ENCODE measurements at regions of chr6 and their contacts with region 1.

Region 1: GRCh38 chr6:13711733-13712598 is at the start of gene RANBP9:
- DNase-seq: peak; percentile 84
- ATAC-seq: peak; percentile 88
- H3K4me3 ChIP-seq: peak within 1 kb of the TSS; percentile 92 to 97 (median 95)
- H3K27ac ChIP-seq: peak within 1 kb of the TSS; percentile 93
- H3K4me1 ChIP-seq: peaks cover 49% of the 10 kb centered on the region
- H3K27me3 ChIP-seq: no peaks in the 10 kb centered on the region; a peak in 1 of 5 replicates
- CTCF ChIP-seq: peak; percentile 34; the same call in 1 of the 2 replicates
- EP300 ChIP-seq: peak in 1 of 2 experiments; percentile 39; a peak in 1 of 4 replicates
- POLR2A ChIP-seq: peak; percentile 84
- RAD21 ChIP-seq: no peak
- total RNA-seq, gene RANBP9: 30.6 and 40.8 TPM in 2 replicates

Region 2: GRCh38 chr6:13604546-13605416 is 107.2 kb before region 1 on chr6:
- CTCF ChIA-PET with region 1: no interaction called
- POLR2A ChIA-PET with region 1: interaction called, 11 read pairs
- in situ Hi-C with region 1: no loop called
- intact Hi-C with region 1: no loop called
- DNase-seq: peak; percentile 100
- ATAC-seq: peak; percentile 94
- H3K4me3 ChIP-seq: peak overlapping the region in 2 of 3 experiments; percentile 32 to 46; a peak in 2 of 6 replicates
- H3K27ac ChIP-seq: peak overlapping the region; percentile 87
- H3K4me1 ChIP-seq: peaks cover 44% of the 10 kb centered on the region
- H3K27me3 ChIP-seq: no peaks in the 10 kb centered on the region
- CTCF ChIP-seq: no peak
- EP300 ChIP-seq: peak; percentile 97 to 99
- POLR2A ChIP-seq: peak in 1 of 2 experiments; percentile 46; a peak in 1 of 4 replicates
- RAD21 ChIP-seq: peak; percentile 9; the same call in 1 of the 2 replicates

Region 3: GRCh38 chr6:13614926-13615798 is 96.8 kb before region 1 on chr6 and contains the start of gene NOL7:
- CTCF ChIA-PET with region 1: no interaction called
- POLR2A ChIA-PET with region 1: interaction called, 24 read pairs
- in situ Hi-C with region 1: loop called (anchors 5 kb)
- intact Hi-C with region 1: loop called (anchors 5 kb)
- DNase-seq: peak; percentile 97
- ATAC-seq: peak; percentile 92
- H3K4me3 ChIP-seq: peak within 1 kb of the TSS; percentile 89 to 97 (median 93)
- H3K27ac ChIP-seq: peak within 1 kb of the TSS; percentile 91
- H3K4me1 ChIP-seq: peaks cover 35% of the 10 kb centered on the region
- H3K27me3 ChIP-seq: no peaks in the 10 kb centered on the region; a peak in 1 of 5 replicates
- CTCF ChIP-seq: peak; percentile 100
- EP300 ChIP-seq: peak in 1 of 2 experiments; percentile 11; a peak in 1 of 4 replicates
- POLR2A ChIP-seq: peak; percentile 93 to 96
- RAD21 ChIP-seq: peak; percentile 55; the same call in 1 of the 2 replicates
- total RNA-seq, gene NOL7: 186 and 215 TPM in 2 replicates

Region 4: DNA sequence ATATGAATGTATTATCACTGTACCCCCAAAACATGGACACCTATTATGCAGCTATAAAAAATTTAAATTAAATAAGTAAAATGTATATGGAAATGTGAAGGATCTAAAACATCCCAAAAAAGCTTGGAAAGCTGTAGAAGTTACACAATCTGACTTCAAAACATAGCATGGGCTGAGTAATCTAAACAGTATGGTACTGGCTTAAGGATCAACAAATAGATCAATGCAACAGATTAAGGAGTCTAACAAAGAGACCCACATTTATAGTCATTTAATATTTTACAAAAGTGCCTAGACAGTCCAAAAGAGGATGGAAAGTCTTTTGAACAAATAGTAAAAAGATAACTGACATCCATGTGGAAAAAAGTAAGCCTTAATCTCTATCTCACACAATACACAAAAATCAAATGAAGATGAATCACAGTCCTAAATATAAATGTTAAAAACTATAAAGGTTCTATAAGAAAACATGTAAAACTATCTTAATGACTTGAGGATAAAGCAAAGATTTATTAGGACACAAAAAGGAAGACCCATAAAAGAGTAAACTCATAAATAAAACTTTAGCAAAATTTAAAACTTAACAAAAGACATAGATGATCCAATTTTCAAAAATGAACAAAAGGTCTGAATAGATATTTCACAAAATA is 47.1 kb before region 1 on chr6:
- CTCF ChIA-PET with region 1: no interaction called
- POLR2A ChIA-PET with region 1: interaction called, 8 read pairs
- in situ Hi-C with region 1: no loop called
- intact Hi-C with region 1: loop called (anchors 2 kb)
- DNase-seq: peak; percentile 65
- ATAC-seq: peak; percentile 66
- H3K4me3 ChIP-seq: no peak overlapping the region
- H3K27ac ChIP-seq: peak overlapping the region; percentile 12
- H3K4me1 ChIP-seq: peaks cover 85% of the 10 kb centered on the region
- H3K27me3 ChIP-seq: no peaks in the 10 kb centered on the region
- CTCF ChIP-seq: no peak
- EP300 ChIP-seq: peak in 1 of 2 experiments; percentile 84; a peak in 2 of 4 replicates
- POLR2A ChIP-seq: no peak
- RAD21 ChIP-seq: no peak

Region 5: GRCh38 chr6:13678255-13678983 is 33.5 kb before region 1 on chr6:
- CTCF ChIA-PET with region 1: no interaction called
- POLR2A ChIA-PET with region 1: interaction called, 4 read pairs
- in situ Hi-C with region 1: no loop called
- intact Hi-C with region 1: loop called (anchors 1 kb)
- DNase-seq: peak; percentile 30
- ATAC-seq: peak; percentile 87
- H3K4me3 ChIP-seq: peak overlapping the region in 2 of 3 experiments; percentile 4 to 38; a peak in 1 of 6 replicates
- H3K27ac ChIP-seq: peak overlapping the region; percentile 83
- H3K4me1 ChIP-seq: peaks cover 33% of the 10 kb centered on the region
- H3K27me3 ChIP-seq: no peaks in the 10 kb centered on the region
- CTCF ChIP-seq: no peak
- EP300 ChIP-seq: no peak; a peak in 1 of 4 replicates
- POLR2A ChIP-seq: no peak
- RAD21 ChIP-seq: no peak

Region 6: DNA sequence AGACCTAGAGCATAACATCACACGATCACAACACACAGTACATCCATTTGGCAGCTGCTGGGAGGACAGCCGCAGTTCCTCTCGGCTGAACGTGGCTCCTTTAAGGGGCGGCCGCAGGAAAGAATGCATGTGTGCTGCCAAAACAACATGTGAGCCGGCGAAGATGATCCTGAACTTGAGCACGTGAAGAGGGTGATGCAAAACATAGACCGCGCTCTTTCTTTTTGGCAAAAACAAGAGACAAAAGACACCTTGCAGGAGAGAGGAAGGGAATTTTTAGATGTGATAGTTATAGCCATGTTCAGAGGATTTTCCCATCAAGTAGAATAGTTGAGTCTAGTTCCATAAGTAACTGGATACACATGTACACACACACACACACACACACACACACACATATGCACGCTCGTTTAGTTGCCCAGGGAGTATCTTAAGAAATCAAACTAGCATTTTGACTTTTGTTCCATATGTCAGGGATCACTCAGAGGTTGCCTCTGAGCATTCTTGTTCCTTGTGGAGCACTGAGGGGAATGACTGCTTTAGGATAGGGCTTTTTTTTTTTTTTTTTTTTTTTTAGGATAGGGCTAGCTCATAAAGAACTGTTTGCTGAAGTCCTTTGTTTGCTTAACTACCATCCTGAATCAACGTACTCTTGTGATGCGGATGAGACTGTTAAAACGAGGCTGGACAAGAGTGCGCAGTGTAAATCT is 21.4 kb after region 1 on chr6:
- CTCF ChIA-PET with region 1: no interaction called
- POLR2A ChIA-PET with region 1: no interaction called
- in situ Hi-C with region 1: no loop called
- intact Hi-C with region 1: no loop called
- DNase-seq: peak; percentile 46
- ATAC-seq: peak; percentile 81
- H3K4me3 ChIP-seq: peak overlapping the region in 1 of 3 experiments; percentile 51; a peak in 3 of 6 replicates
- H3K27ac ChIP-seq: no peak overlapping the region
- H3K4me1 ChIP-seq: peaks cover 19% of the 10 kb centered on the region
- H3K27me3 ChIP-seq: peaks cover 0 to 28% of the 10 kb centered on the region in 2 experiments; a peak in 2 of 5 replicates
- CTCF ChIP-seq: no peak
- EP300 ChIP-seq: no peak
- POLR2A ChIP-seq: no peak
- RAD21 ChIP-seq: no peak

Region 7: GRCh38 chr6:13814176-13814937 is 102.4 kb after region 1 on chr6 and contains the start of gene MCUR1:
- CTCF ChIA-PET with region 1: no interaction called
- POLR2A ChIA-PET with region 1: interaction called, 10 read pairs
- in situ Hi-C with region 1: no loop called
- intact Hi-C with region 1: loop called (anchors 5 kb)
- DNase-seq: peak; percentile 77
- ATAC-seq: peak; percentile 86
- H3K4me3 ChIP-seq: peak within 1 kb of the TSS; percentile 74 to 92 (median 84)
- H3K27ac ChIP-seq: peak within 1 kb of the TSS; percentile 94
- H3K4me1 ChIP-seq: peaks cover 54% of the 10 kb centered on the region
- H3K27me3 ChIP-seq: no peaks in the 10 kb centered on the region
- CTCF ChIP-seq: peak; percentile 66
- EP300 ChIP-seq: no peak
- POLR2A ChIP-seq: peak; percentile 87 to 89
- RAD21 ChIP-seq: peak; percentile 66
- total RNA-seq, gene MCUR1: 27.6 and 29.6 TPM in 2 replicates

Region 8: DNA sequence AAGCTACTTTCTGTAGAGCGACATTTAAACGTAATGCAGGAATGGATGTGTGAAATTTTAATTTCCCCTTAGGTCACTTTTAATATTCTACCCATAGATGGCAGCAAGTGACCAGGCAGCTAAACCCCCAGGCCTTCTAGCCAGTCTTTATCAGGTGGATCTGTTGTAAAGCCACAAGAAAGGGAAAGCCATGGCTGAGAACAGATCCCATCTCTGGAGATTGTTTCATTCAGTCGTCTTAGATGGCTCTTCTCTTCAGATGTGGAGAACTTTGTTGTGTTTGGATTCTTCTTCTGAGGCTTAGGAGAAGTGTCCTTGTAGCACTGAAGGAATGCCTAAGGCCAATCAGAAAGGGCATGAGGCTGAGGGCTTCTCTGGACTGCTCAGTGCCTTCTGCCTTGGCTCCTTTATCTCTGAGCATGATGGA is 197.0 kb after region 1 on chr6:
- CTCF ChIA-PET with region 1: no interaction called
- POLR2A ChIA-PET with region 1: no interaction called
- in situ Hi-C with region 1: no loop called
- intact Hi-C with region 1: no loop called
- DNase-seq: peak; percentile 55
- ATAC-seq: peak; percentile 88
- H3K4me3 ChIP-seq: no peak overlapping the region
- H3K27ac ChIP-seq: no peak overlapping the region
- H3K4me1 ChIP-seq: no peaks in the 10 kb centered on the region
- H3K27me3 ChIP-seq: no peaks in the 10 kb centered on the region
- CTCF ChIP-seq: peak; percentile 86
- EP300 ChIP-seq: no peak
- POLR2A ChIP-seq: no peak
- RAD21 ChIP-seq: peak; percentile 78

Region 9: DNA sequence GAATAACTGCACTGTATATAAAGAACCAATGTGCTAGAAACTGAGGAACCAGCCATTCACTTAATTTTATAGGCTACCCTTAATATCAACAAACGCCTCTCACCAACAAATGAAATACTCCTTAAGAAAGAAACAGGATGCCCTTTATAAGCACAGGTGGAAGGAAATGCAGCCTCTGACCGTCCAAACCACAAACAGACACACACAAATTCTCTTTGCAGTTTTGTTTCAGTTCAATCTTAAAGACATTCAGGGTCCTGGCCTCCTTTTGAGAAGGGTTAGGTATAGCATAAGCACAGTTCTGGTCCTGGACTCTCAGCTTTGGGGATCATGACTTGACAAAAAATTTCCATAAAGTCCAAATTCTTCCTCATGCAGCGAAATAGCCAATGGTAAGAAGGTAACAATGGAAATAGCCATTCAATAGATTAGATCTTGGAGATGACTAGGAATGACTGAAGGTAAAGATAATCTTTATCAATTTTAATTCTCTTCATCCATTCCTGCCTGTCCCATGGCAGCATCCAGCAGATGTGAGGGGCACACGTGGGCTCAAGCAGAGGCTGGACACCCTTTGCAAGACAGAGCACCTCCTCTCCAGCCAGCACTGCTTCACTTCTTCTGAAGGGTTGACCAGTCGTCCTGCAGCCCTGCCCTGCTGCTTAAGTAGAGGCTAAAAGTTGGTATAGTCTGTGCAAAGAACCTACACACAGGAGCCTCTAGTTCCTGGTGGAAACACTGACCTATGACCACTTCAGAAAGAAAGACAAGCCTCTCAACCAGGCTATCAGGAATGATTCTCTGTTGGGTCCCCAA is 529.5 kb after region 1 on chr6:
- CTCF ChIA-PET with region 1: no interaction called
- POLR2A ChIA-PET with region 1: no interaction called
- in situ Hi-C with region 1: no loop called
- intact Hi-C with region 1: no loop called
- DNase-seq: no peak
- ATAC-seq: no peak
- H3K4me3 ChIP-seq: no peak overlapping the region
- H3K27ac ChIP-seq: no peak overlapping the region
- H3K4me1 ChIP-seq: no peaks in the 10 kb centered on the region
- H3K27me3 ChIP-seq: no peaks in the 10 kb centered on the region
- CTCF ChIP-seq: no peak
- EP300 ChIP-seq: no peak
- POLR2A ChIP-seq: no peak
- RAD21 ChIP-seq: no peak